CD8-positive, alpha-beta memory T cell (primary cell): ENCODE measurements at regions of chr1 and their contacts with region 1.

Region 1: GRCh38 chr1:9004700-9005394 is 21.4 kb downstream of the SLC2A7 start:
- DNase-seq: peak; percentile 54 to 80 (median 65)
- H3K4me3 ChIP-seq: peak overlapping the region; percentile 26
- H3K4me3 Mint-ChIP-seq: peak overlapping the region in 6 of 7 donors; percentile 38 to 78 (median 70)
- H3K27ac ChIP-seq: no peak overlapping the region
- H3K27ac Mint-ChIP-seq: peak overlapping the region in 3 of 8 donors; percentile 41 to 70 (median 52)
- H3K4me1 ChIP-seq: peaks cover 10% of the 10 kb centered on the region
- H3K4me1 Mint-ChIP-seq: peaks cover 7 to 14% (median 10%) of the 10 kb centered on the region in 3 donors
- H3K27me3 ChIP-seq: no peaks in the 10 kb centered on the region
- H3K27me3 Mint-ChIP-seq: no peaks in the 10 kb centered on the region

Region 2: DNA sequence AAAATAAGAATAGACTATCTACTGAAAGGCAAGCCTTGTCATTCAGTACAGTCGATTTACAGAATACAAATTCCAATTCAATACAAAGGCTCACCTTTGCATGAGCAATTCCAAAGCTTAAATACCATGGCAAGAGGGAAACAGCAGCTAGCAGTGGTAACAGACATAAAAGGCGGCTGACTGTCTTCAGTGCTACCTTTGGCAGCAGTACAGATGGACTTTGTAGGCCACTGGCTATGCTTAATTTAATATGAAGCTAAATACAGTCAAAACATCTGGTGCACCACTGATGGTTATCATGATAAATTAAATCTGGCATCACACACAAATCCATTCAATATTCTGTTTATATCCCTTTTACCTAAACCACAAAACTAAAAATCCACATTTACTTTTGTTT is 249.9 kb before region 1 on chr1:
- CTCF ChIA-PET with region 1: no interaction called
- POLR2A ChIA-PET with region 1: no interaction called
- DNase-seq: no peak
- H3K4me3 ChIP-seq: no peak overlapping the region
- H3K4me3 Mint-ChIP-seq: no peak overlapping the region
- H3K27ac ChIP-seq: no peak overlapping the region
- H3K27ac Mint-ChIP-seq: no peak overlapping the region
- H3K4me1 ChIP-seq: no peaks in the 10 kb centered on the region
- H3K4me1 Mint-ChIP-seq: peaks cover 4 to 12% (median 5%) of the 10 kb centered on the region in 3 donors
- H3K27me3 ChIP-seq: no peaks in the 10 kb centered on the region
- H3K27me3 Mint-ChIP-seq: no peaks in the 10 kb centered on the region

Region 3: DNA sequence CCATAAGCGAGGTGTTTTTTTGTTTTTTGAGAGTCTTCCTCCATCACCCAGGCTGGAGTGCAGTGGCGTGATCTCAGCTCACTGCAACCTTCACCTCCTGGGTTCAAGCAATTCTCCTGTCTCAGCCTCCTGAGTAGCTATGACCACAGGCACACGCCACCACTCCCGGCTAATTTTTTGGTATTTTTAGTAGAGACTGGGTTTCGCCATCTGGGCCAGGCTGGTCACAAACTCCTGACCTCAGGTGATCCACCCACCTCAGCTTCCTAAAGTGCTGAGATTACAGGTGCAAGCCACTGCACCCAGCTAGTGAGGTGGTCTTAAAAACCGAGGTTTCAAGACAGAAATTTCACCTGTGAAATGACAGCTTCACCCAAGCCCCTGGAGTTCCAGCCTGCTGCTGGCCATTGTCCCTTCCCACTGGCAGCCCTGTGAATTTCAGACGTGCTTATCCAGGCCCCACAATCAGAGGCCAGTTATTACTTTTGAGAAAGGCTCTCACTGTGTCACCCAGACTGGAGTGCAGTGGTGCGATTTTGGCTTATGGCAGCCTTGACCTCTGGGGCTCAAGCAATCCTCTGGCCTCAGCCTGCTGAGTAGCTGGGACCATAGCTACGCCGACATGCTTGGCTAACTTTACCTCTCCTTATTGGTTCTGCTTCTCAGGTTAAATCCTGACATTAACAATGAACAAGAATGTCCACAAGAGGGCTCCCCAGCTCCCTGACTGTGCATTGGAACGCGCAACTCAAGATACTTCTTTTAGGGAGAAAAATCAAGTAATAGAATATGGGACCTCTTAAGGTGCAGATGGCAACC is 145.8 kb before region 1 on chr1:
- CTCF ChIA-PET with region 1: interaction called, 12 read pairs
- POLR2A ChIA-PET with region 1: no interaction called
- DNase-seq: peak in 4 of 5 donors; percentile 20 to 62 (median 48)
- H3K4me3 ChIP-seq: no peak overlapping the region
- H3K4me3 Mint-ChIP-seq: peak overlapping the region in 1 of 7 donors; percentile 18
- H3K27ac ChIP-seq: no peak overlapping the region
- H3K27ac Mint-ChIP-seq: peak overlapping the region in 7 of 8 donors; percentile 13 to 94 (median 77)
- H3K4me1 ChIP-seq: no peaks in the 10 kb centered on the region
- H3K4me1 Mint-ChIP-seq: peaks cover 10 to 25% (median 17%) of the 10 kb centered on the region in 3 donors
- H3K27me3 ChIP-seq: no peaks in the 10 kb centered on the region
- H3K27me3 Mint-ChIP-seq: peaks cover 0 to 2% of the 10 kb centered on the region in 2 donors

Region 4: GRCh38 chr1:8913111-8913856 is 91.6 kb before region 1 on chr1:
- CTCF ChIA-PET with region 1: interaction called, 53 read pairs
- POLR2A ChIA-PET with region 1: interaction called, 5 read pairs
- DNase-seq: no peak
- H3K4me3 ChIP-seq: no peak overlapping the region
- H3K4me3 Mint-ChIP-seq: no peak overlapping the region
- H3K27ac ChIP-seq: no peak overlapping the region
- H3K27ac Mint-ChIP-seq: no peak overlapping the region
- H3K4me1 ChIP-seq: peaks cover 2% of the 10 kb centered on the region
- H3K4me1 Mint-ChIP-seq: peaks cover 3 to 8% (median 8%) of the 10 kb centered on the region in 3 donors
- H3K27me3 ChIP-seq: no peaks in the 10 kb centered on the region
- H3K27me3 Mint-ChIP-seq: peaks cover 0 to 8% of the 10 kb centered on the region in 2 donors

Region 5: GRCh38 chr1:8925406-8925805 is 79.4 kb before region 1 on chr1:
- CTCF ChIA-PET with region 1: interaction called, 53 read pairs
- POLR2A ChIA-PET with region 1: no interaction called
- DNase-seq: no peak
- H3K4me3 ChIP-seq: peak overlapping the region; percentile 46
- H3K4me3 Mint-ChIP-seq: no peak overlapping the region
- H3K27ac ChIP-seq: no peak overlapping the region
- H3K27ac Mint-ChIP-seq: no peak overlapping the region
- H3K4me1 ChIP-seq: peaks cover 60% of the 10 kb centered on the region
- H3K4me1 Mint-ChIP-seq: peaks cover 16 to 26% (median 21%) of the 10 kb centered on the region in 3 donors
- H3K27me3 ChIP-seq: no peaks in the 10 kb centered on the region
- H3K27me3 Mint-ChIP-seq: no peaks in the 10 kb centered on the region

Region 6: GRCh38 chr1:8962812-8963530 is 41.9 kb before region 1 on chr1:
- CTCF ChIA-PET with region 1: interaction called, 12 read pairs
- POLR2A ChIA-PET with region 1: no interaction called
- DNase-seq: peak in 2 of 5 donors; percentile 52 to 58
- H3K4me3 ChIP-seq: peak overlapping the region; percentile 10
- H3K4me3 Mint-ChIP-seq: peak overlapping the region in 4 of 7 donors; percentile 54 to 66 (median 63)
- H3K27ac ChIP-seq: no peak overlapping the region
- H3K27ac Mint-ChIP-seq: peak overlapping the region in 6 of 8 donors; percentile 1 to 84 (median 46)
- H3K4me1 ChIP-seq: peaks cover 52% of the 10 kb centered on the region
- H3K4me1 Mint-ChIP-seq: peaks cover 22 to 63% (median 57%) of the 10 kb centered on the region in 3 donors
- H3K27me3 ChIP-seq: no peaks in the 10 kb centered on the region
- H3K27me3 Mint-ChIP-seq: peaks cover 4 to 14% of the 10 kb centered on the region in 2 donors

Region 7: DNA sequence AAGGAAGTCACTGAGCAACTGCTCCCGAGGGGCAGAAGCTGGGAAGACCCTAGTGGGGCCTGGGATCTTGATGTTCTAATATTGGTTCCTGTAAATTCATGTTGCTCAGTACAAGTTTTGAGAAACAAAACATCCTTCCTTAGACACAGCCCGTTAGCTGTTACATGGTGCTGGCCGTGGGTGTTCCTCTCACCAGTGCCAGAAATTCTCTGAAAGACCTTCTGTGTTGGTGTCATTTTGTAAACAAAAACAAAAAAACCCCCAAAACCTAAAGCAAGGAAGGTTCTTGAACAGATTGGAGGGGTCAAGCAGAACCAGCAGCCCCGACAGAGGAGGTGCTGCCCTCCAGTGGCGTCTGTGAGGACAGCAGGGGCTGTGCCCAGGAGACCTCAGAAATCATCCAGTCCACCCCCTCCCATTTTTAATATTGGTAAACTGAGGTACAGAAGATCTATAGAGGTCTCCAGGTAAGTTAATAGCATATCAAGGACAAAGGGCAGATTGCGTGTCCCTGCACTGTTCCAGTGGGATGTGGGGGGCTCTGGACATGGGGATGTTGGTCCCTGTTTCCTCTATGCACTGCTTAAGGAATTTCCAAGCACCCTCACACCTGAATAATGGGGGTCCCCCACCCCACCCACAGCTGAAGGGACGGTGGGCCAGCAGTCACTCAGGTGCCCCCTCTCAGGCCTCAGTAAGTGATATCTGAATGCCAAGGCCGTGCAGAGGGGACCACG is 16.8 kb before region 1 on chr1:
- CTCF ChIA-PET with region 1: interaction called, 34 read pairs
- POLR2A ChIA-PET with region 1: no interaction called
- DNase-seq: peak; percentile 39 to 69 (median 50)
- H3K4me3 ChIP-seq: no peak overlapping the region
- H3K4me3 Mint-ChIP-seq: peak overlapping the region in 4 of 7 donors; percentile 34 to 67 (median 52)
- H3K27ac ChIP-seq: no peak overlapping the region
- H3K27ac Mint-ChIP-seq: peak overlapping the region in 6 of 8 donors; percentile 9 to 60 (median 21)
- H3K4me1 ChIP-seq: peaks cover 23% of the 10 kb centered on the region
- H3K4me1 Mint-ChIP-seq: peaks cover 16 to 20% (median 19%) of the 10 kb centered on the region in 3 donors
- H3K27me3 ChIP-seq: no peaks in the 10 kb centered on the region
- H3K27me3 Mint-ChIP-seq: peaks cover 0 to 1% of the 10 kb centered on the region in 2 donors